ENCODE measurements at regions of chr1 and their contacts with region 1.

Region 1: GRCh38 chr1:69191335-69191734 is 376.4 kb upstream of the LRRC7 start:
- DNase-seq: no peak
- H3K4me3 Mint-ChIP-seq: no peak overlapping the region
- H3K27ac Mint-ChIP-seq: no peak overlapping the region
- H3K4me1 Mint-ChIP-seq: no peaks in the 10 kb centered on the region
- H3K27me3 Mint-ChIP-seq: no peaks in the 10 kb centered on the region

Region 2: GRCh38 chr1:69139007-69139406 is 52.3 kb before region 1 on chr1:
- intact Hi-C with region 1: no loop called
- DNase-seq: no peak
- H3K4me3 Mint-ChIP-seq: no peak overlapping the region
- H3K27ac Mint-ChIP-seq: no peak overlapping the region
- H3K4me1 Mint-ChIP-seq: no peaks in the 10 kb centered on the region
- H3K27me3 Mint-ChIP-seq: no peaks in the 10 kb centered on the region

Region 3: GRCh38 chr1:69172003-69173000 is 19.0 kb before region 1 on chr1:
- intact Hi-C with region 1: no loop called
- DNase-seq: no peak
- H3K4me3 Mint-ChIP-seq: no peak overlapping the region
- H3K27ac Mint-ChIP-seq: no peak overlapping the region
- H3K4me1 Mint-ChIP-seq: no peaks in the 10 kb centered on the region
- H3K27me3 Mint-ChIP-seq: no peaks in the 10 kb centered on the region

Region 4: DNA sequence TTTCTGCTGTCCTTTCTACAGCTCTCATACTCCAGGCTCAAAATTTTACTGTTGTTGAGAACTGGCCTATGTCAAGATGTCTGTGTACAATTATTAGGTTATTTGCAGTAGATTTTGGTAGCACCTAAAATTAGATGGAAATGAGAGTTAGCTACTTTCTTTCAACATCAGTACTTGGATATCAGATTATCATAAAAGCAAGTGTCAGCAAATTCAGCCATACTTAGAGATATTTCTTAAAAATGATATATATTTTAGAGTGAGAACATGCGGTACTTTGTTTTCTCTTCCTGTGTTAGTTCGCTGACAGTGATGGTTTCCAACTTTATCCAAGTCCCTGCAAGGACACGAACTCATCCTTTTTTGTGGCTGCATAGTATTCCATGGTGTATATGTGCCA is 24.5 kb after region 1 on chr1:
- intact Hi-C with region 1: loop called (anchors 1 kb)
- DNase-seq: no peak
- H3K4me3 Mint-ChIP-seq: no peak overlapping the region
- H3K27ac Mint-ChIP-seq: no peak overlapping the region
- H3K4me1 Mint-ChIP-seq: no peaks in the 10 kb centered on the region
- H3K27me3 Mint-ChIP-seq: no peaks in the 10 kb centered on the region

Region 5: GRCh38 chr1:69263921-69264391 is 72.6 kb after region 1 on chr1:
- intact Hi-C with region 1: no loop called
- DNase-seq: no peak
- H3K4me3 Mint-ChIP-seq: no peak overlapping the region
- H3K27ac Mint-ChIP-seq: no peak overlapping the region
- H3K4me1 Mint-ChIP-seq: no peaks in the 10 kb centered on the region
- H3K27me3 Mint-ChIP-seq: no peaks in the 10 kb centered on the region

Measured in activated CD4-positive, alpha-beta T cell treated with anti-CD3 and anti-CD28 coated beads, Interleukin-2, amount 10 ng/mL, durations not matched to agents 24 days and 14 days (primary cell).